Heart right ventricle (tissue), 16 donors: ENCODE measurements at regions of chr2 and their contacts with region 1.

Region 1: DNA sequence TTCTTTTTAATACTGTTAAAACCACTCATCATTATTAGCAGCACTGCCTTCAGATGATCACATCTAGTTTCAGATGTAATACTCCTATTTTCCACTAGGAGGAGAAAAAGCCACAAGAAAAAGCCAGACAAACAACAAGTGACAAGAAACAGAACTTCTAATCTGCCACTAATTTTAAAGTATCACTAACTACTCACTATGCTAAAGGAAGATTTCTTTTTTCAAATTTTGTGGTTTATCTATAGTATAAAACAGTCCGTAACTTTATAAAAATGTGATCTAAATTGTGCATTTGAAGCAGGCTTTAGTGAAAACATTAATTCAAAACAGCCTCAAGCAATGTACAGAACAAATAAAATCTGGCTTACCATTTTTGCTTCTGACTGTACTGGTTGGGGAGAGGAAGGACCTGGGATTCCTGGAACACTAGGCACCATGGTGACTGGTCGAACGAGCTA is 56.8 kb downstream of the ATF2 start:
- DNase-seq: no peak
- ATAC-seq: peak in 3 of 8 donors; percentile 51 to 61 (median 58)
- H3K4me3 ChIP-seq: no peak overlapping the region
- H3K27ac ChIP-seq: no peak overlapping the region
- H3K4me1 ChIP-seq: peaks cover 0 to 5% (median 0%) of the 10 kb centered on the region in 9 donors
- H3K27me3 ChIP-seq: no peaks in the 10 kb centered on the region
- CTCF ChIP-seq: peak; percentile 69 to 85 (median 81)

Region 2: DNA sequence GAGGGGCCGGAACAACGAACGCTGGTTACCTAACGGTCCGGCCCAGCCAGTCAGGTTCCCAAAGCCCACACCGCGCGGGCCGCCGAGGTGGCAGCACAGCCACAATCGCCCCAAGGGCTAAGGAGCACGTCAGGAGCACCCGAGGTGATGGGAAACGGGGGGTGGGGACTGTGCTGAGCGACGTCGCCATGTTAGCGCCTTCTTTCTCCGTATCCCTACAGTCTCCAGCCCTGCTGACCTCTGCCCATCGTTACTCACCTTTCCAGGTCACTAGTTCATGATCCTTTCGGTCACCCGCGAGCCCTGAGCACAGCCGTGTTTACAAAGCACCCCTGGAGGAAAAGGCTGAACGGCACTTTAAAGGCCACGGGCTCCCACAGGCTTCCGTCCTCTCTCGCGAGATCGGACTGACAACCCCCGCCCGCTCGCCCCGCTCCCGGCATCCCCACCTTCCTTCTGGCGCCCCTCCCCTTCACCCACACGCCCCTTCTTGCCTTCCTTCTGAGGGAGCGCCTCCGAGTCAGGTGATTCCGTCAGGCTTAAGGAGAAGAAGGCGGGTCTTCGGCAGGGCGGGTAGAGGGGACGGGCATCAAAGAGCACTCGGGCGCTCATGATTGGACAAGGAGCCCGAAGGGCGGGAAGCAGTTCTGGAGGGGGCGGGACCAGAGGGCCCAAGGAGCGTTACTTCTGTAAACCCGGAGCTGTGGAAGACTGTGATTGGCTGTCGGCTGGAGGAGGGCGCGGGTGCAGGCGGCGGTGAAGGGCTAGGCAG is 56.7 kb after region 1 on chr2 and contains the start of gene ATF2:
- intact Hi-C with region 1: loop called in 1 of 10 experiments (anchors 10 kb)
- DNase-seq: peak; percentile 96 to 99
- ATAC-seq: peak; percentile 97 to 98 (median 98)
- H3K4me3 ChIP-seq: peak within 1 kb of the TSS; percentile 67 to 98 (median 88)
- H3K27ac ChIP-seq: peak within 1 kb of the TSS; percentile 77 to 98 (median 94)
- H3K4me1 ChIP-seq: peaks cover 0 to 38% (median 26%) of the 10 kb centered on the region in 9 donors
- H3K27me3 ChIP-seq: no peaks in the 10 kb centered on the region
- CTCF ChIP-seq: no peak
- total RNA-seq, gene ATF2: 23.3 to 39.8 (median 29.9) TPM

Region 3: GRCh38 chr2:175181104-175181876 is 70.1 kb after region 1 on chr2 and contains the start of gene ATP5MC3:
- intact Hi-C with region 1: loop called in 2 of 10 experiments (anchors 5 to 10 kb)
- DNase-seq: peak; percentile 94 to 95
- ATAC-seq: peak; percentile 95 to 98 (median 97)
- H3K4me3 ChIP-seq: peak within 1 kb of the TSS; percentile 69 to 96 (median 89)
- H3K27ac ChIP-seq: peak within 1 kb of the TSS; percentile 94 to 98 (median 97)
- H3K4me1 ChIP-seq: peaks cover 0 to 47% (median 32%) of the 10 kb centered on the region in 9 donors
- H3K27me3 ChIP-seq: no peaks in the 10 kb centered on the region
- CTCF ChIP-seq: peak in 4 of 9 donors; percentile 9 to 31 (median 18)
- total RNA-seq, gene ATP5MC3: 813 to 1,522 (median 1,119) TPM

Region 4: DNA sequence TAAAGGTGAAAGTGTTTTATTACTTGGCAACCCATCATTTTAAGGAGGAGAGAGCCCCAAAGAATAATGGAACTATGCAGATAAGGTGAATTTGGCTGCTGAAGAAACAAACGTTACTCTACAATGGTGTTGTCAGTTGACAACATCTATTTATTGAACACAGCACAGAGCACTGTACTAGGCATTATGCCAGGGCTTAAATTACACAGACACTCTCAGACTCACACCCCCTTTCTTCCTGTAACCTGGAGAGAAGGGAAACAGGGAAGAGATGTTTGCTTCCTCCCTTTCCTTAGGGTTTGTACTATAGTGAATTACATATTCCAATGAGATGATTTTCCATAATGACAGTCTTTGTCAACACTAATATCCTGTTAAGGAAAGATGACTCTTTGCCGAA is 164.3 kb after region 1 on chr2:
- intact Hi-C with region 1: loop called in 5 of 10 experiments (anchors 5 to 10 kb)
- DNase-seq: no peak
- ATAC-seq: peak in 3 of 8 donors; percentile 39 to 76 (median 75)
- H3K4me3 ChIP-seq: no peak overlapping the region
- H3K27ac ChIP-seq: no peak overlapping the region
- H3K4me1 ChIP-seq: peaks cover 0 to 6% (median 0%) of the 10 kb centered on the region in 9 donors
- H3K27me3 ChIP-seq: peaks cover 0 to 11% (median 0%) of the 10 kb centered on the region in 7 donors
- CTCF ChIP-seq: no peak

Region 5: GRCh38 chr2:175282290-175282689 is 171.1 kb after region 1 on chr2:
- intact Hi-C with region 1: loop called in 5 of 10 experiments (anchors 5 to 10 kb)
- DNase-seq: no peak
- ATAC-seq: peak in 5 of 8 donors; percentile 42 to 69 (median 52)
- H3K4me3 ChIP-seq: no peak overlapping the region
- H3K27ac ChIP-seq: no peak overlapping the region
- H3K4me1 ChIP-seq: no peaks in the 10 kb centered on the region
- H3K27me3 ChIP-seq: peaks cover 0 to 7% (median 0%) of the 10 kb centered on the region in 7 donors
- CTCF ChIP-seq: peak in 8 of 9 donors; percentile 24 to 65 (median 55)